Colonic mucosa (tissue), 4 donors: ENCODE measurements at regions of chr12 and their contacts with region 1.

Region 1: DNA sequence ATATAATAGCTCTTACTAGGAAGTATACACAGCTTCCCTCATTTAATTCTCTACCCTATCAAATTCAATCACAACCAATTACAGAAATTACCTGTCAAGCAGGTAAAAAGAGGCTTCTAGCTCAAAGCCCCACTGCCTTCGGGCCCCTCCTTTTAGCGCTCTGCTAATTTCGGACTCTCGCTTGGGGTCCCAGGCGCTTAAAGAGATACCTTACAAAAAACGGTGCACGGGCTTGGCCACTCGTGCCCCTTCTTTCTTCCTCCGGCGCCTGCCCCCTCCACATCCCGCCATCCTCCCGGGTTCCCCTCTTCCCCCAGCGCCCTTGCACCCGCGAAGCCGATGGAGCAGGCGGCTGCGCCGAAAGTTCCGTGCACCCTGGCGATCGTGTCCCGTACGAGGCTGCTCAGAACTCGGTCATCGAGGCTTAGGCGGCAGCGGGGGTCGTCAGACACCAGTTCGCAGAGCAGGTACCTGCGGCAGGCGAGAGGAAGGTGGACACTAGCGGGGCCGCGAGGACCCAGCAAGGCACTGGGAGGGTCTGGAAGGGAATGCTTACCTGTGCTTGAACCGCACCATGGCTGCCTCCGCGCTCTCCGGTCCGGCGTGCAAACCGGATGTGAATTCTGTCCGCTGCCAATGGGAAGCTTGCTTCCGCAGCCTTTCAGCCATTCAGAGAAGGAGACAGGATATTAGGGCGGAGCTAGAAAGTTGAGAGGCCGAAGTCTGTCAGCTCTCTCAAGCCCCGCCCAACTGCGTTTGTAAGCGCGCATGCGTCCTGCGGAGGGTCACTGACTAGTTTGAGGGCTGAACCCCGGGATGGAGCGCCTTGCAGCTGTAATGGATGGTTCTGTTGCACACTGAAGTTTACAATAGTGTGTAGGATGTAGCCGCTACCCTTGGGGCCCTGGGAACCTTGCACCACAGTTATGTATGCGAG is at the start of gene POP5:
- DNase-seq: peak; percentile 99
- H3K4me3 ChIP-seq: peak within 1 kb of the TSS; percentile 62
- H3K27ac ChIP-seq: peak within 1 kb of the TSS; percentile 34
- H3K4me1 ChIP-seq: peaks cover 11% of the 10 kb centered on the region
- H3K27me3 ChIP-seq: no peaks in the 10 kb centered on the region
- CTCF ChIP-seq: no peak
- total RNA-seq, gene POP5: 22.8 to 77.7 TPM

Region 2: DNA sequence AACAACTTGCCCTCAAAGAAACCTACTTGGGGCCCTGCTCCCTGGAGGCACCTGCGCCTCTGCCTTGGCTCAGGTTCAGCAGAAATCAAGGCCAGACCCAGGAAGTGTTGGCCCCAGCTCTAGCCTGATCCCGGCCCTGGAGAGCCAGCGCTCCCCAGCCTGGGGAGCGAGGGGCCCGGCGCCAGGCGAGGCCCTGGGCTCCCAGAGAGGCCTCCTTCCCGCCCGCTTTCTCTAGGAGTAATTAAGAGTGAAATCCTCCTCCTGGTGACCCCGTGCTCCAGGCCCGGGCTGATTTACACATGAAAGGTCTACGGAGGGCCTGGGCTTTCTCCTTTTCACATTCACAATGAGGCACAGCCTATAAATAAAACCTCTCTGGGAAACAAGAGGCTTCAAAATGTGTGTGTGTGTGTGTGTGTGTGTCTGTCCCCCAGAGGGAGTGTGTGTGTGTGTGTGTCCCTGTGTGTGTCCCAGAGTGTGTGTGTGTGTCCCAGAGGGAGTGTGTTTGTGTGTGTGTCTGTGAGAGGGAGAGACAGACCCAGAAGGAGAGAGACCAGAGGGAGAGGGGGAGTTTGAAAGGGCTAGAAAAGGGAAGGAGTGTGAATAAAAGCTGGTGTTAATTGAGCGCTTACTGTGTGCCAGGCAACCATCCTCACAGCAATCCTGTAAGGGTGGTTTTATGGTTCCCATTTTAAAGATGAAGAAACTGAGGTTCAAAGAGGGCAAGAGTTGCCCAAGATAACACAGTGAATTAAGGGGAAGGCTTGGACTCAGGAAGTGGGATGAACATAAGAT is 167.0 kb before region 1 on chr12:
- intact Hi-C with region 1: no loop called
- DNase-seq: peak; percentile 49
- H3K4me3 ChIP-seq: no peak overlapping the region
- H3K27ac ChIP-seq: no peak overlapping the region
- H3K4me1 ChIP-seq: no peaks in the 10 kb centered on the region
- H3K27me3 ChIP-seq: no peaks in the 10 kb centered on the region
- CTCF ChIP-seq: no peak

Region 3: GRCh38 chr12:120649442-120650232 is 68.6 kb after region 1 on chr12:
- intact Hi-C with region 1: loop called (anchors 5 kb)
- DNase-seq: no peak
- H3K4me3 ChIP-seq: no peak overlapping the region
- H3K27ac ChIP-seq: peak overlapping the region; percentile 54
- H3K4me1 ChIP-seq: no peaks in the 10 kb centered on the region
- H3K27me3 ChIP-seq: peaks cover 3% of the 10 kb centered on the region
- CTCF ChIP-seq: peak; percentile 21

Region 4: GRCh38 chr12:120719496-120720233 is 138.6 kb after region 1 on chr12:
- intact Hi-C with region 1: loop called (anchors 5 kb)
- DNase-seq: peak; percentile 50
- H3K4me3 ChIP-seq: no peak overlapping the region
- H3K27ac ChIP-seq: peak overlapping the region; percentile 46
- H3K4me1 ChIP-seq: peaks cover 10% of the 10 kb centered on the region
- H3K27me3 ChIP-seq: no peaks in the 10 kb centered on the region
- CTCF ChIP-seq: no peak

Region 5: DNA sequence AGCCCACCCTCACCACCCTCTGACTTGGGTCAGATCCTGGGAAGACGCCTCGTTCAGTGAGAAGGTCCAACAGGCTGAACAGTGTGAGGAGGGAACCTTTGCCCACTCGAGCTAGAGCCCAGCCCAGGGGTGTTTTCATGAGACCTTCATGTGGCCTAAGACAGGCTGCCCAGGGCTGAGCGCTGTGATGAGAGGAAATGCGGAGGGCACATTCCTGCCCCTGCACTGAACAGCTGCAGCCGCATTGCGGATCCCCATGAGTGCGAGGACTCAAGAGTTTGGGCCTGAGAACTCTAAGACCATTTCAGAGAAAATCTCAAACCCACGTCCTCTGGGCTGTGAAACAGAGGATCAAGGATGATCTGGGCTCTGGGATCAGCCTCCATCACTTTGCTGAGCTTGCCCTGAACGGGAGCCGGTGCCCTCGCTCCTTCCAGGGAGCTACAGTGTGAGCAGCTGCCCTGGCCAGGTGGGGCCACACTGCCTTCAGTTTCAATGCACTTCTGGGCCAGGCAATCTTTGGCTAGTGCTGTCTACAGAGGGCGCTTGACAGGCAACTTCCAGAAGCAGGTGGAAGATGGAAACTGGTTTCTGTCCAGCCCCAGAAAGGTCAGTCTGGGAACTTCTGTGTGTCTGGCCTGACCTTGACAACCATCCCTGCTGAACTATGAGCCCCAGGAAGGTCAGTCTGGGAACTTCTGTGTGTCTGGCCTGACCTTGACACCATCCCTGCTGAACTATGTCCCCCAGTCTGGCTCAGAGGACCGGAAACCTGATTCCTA is 508.2 kb after region 1 on chr12:
- intact Hi-C with region 1: no loop called
- DNase-seq: no peak
- H3K4me3 ChIP-seq: no peak overlapping the region
- H3K27ac ChIP-seq: no peak overlapping the region
- H3K4me1 ChIP-seq: no peaks in the 10 kb centered on the region
- H3K27me3 ChIP-seq: no peaks in the 10 kb centered on the region
- CTCF ChIP-seq: no peak